Activated CD4-positive, alpha-beta T cell treated with anti-CD3 and anti-CD28 coated beads for 36 hours (primary cell): ENCODE measurements at regions of chr7 and their contacts with region 1.

Region 1: GRCh38 chr7:44797329-44798251 is 1.1 kb downstream of the PPIA start:
- DNase-seq: peak; percentile 91
- ATAC-seq: peak; percentile 58
- H3K4me3 Mint-ChIP-seq: peak overlapping the region; percentile 100
- H3K27ac Mint-ChIP-seq: peak overlapping the region; percentile 99
- H3K4me1 Mint-ChIP-seq: peaks cover 41% of the 10 kb centered on the region
- H3K27me3 Mint-ChIP-seq: no peaks in the 10 kb centered on the region

Region 2: DNA sequence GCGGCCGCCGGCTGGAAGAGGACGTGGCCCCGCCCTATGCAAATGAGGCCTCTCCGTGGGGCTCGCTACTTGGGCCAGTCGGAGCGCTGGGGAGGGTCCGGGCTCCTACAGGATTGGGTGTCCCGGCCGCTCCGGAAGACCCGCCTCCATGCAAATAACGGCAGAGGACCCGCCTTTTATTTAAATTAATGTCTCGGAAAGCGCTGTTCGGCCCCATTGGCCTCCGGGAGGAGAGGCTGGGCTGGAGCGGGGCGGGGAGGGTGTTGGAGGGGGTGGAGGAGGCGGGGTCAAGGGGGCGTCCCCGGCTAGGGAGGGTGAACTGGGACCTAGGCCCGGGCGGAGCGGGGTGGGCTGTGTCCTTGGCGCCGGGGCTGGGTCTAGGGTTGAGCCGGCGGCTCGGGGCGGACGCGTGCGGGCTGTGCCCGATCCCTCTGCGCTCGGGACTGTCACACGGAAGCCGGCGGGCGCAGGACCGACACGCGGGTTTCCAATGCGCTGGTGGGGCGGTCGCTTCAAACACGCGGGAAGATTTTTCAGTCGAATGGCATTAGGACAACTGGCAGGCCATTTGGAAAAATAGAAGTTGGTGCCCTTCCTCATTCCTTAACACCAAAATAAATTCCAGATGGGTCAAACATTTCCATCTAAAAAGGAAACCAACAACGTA is 714.9 kb before region 1 on chr7:
- CTCF ChIA-PET with region 1: interaction called, 4 read pairs
- POLR2A ChIA-PET with region 1: no interaction called
- intact Hi-C with region 1: loop called (anchors 1 to 2 kb)
- DNase-seq: peak; percentile 99
- ATAC-seq: peak; percentile 95
- H3K4me3 Mint-ChIP-seq: peak overlapping the region; percentile 70
- H3K27ac Mint-ChIP-seq: peak overlapping the region; percentile 79
- H3K4me1 Mint-ChIP-seq: peaks cover 36% of the 10 kb centered on the region
- H3K27me3 Mint-ChIP-seq: no peaks in the 10 kb centered on the region

Region 3: DNA sequence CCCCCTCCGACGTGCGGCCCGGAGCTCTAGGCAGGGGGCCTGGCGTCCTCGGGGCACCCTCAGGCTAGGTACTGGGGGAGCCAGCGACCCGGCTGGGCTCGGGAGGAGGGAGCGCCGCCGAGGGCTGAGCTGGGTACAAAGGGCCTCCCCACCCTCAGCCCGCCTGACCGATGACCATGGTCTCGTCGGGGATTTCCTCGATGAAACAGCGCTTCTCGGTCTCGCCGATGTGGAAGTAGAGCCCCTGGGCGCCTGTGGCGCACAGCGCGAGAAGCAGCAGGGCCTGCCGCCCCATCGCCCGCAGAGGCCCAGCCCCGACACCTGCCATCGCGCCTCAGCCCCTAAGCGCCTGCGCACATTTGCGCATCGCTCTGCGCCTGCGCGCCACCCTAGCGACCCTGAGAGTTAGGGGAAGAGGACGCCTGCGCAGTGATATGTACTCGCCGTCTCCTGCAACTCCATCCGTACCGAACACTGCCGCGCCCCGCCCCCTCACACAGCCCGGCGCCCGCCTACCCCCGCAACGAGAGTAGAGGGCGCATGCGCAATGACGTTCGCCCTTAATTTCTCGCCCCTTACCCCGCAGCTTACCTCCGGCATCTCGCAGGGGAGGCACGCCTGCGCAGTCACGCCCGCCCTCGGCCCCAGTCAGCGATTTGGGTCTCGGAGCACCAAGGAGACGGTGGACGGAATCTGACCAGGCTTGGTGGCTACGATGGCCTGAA is 215.5 kb before region 1 on chr7 and contains the start of gene TMED4:
- CTCF ChIA-PET with region 1: no interaction called
- POLR2A ChIA-PET with region 1: interaction called, 7 read pairs
- intact Hi-C with region 1: loop called (anchors 1 to 2 kb)
- DNase-seq: peak; percentile 100
- ATAC-seq: peak; percentile 95
- H3K4me3 Mint-ChIP-seq: peak within 1 kb of the TSS; percentile 85
- H3K27ac Mint-ChIP-seq: peak within 1 kb of the TSS; percentile 92
- H3K4me1 Mint-ChIP-seq: peaks cover 33% of the 10 kb centered on the region
- H3K27me3 Mint-ChIP-seq: no peaks in the 10 kb centered on the region
- total RNA-seq, gene TMED4: 71.6 to 73.0 TPM

Region 4: GRCh38 chr7:44638611-44639557 is 158.7 kb before region 1 on chr7:
- CTCF ChIA-PET with region 1: interaction called, 5 read pairs
- POLR2A ChIA-PET with region 1: interaction called, 4 read pairs
- intact Hi-C with region 1: loop called in 1 of 2 experiments (anchors 1 kb)
- DNase-seq: peak; percentile 90
- ATAC-seq: peak; percentile 71
- H3K4me3 Mint-ChIP-seq: peak overlapping the region; percentile 73
- H3K27ac Mint-ChIP-seq: peak overlapping the region; percentile 100
- H3K4me1 Mint-ChIP-seq: peaks cover 75% of the 10 kb centered on the region
- H3K27me3 Mint-ChIP-seq: no peaks in the 10 kb centered on the region

Region 5: GRCh38 chr7:44885394-44886317 is 88.1 kb after region 1 on chr7 and contains the start of gene PURB:
- CTCF ChIA-PET with region 1: no interaction called
- POLR2A ChIA-PET with region 1: interaction called, 18 read pairs
- intact Hi-C with region 1: loop called in 1 of 2 experiments (anchors 1 kb)
- DNase-seq: peak; percentile 98
- ATAC-seq: peak; percentile 97
- H3K4me3 Mint-ChIP-seq: peak within 1 kb of the TSS; percentile 86
- H3K27ac Mint-ChIP-seq: peak within 1 kb of the TSS; percentile 98
- H3K4me1 Mint-ChIP-seq: peaks cover 51% of the 10 kb centered on the region
- H3K27me3 Mint-ChIP-seq: no peaks in the 10 kb centered on the region
- total RNA-seq, gene PURB: 18.8 to 20.8 TPM

Region 6: DNA sequence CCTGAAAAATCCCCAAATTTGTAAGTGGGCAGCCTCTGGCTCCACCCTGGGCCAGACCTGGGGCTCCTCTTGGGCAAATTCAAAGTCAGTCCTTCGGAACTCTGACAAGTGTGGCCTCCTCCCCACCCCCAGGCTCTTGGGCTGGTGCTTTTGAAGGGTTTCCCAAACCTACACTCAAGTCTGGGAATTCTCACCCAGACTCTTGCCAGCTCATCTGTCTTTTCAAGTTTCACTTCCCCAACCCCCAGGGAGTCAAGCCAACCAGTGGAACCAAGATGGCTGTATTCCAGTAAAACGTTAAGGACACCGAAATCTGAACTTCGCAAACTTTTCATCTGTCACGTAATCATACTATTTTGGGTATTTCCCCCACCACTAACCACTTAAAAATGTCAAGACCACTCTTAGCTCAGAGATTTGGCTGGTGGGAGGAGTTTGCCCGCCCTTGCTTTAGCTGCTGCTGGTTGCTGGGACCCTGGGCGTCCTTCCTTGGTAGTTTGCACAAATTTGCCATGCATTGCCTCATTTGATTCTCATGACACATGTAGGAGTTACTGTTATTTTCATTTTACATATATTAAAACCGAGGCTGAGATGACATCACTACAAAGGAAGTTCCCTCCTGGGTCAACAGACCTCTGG is 182.9 kb after region 1 on chr7:
- CTCF ChIA-PET with region 1: no interaction called
- POLR2A ChIA-PET with region 1: interaction called, 3 read pairs
- intact Hi-C with region 1: loop called (anchors 1 to 5 kb)
- DNase-seq: peak; percentile 94
- ATAC-seq: peak; percentile 48
- H3K4me3 Mint-ChIP-seq: peak overlapping the region; percentile 99
- H3K27ac Mint-ChIP-seq: peak overlapping the region; percentile 99
- H3K4me1 Mint-ChIP-seq: peaks cover 68% of the 10 kb centered on the region
- H3K27me3 Mint-ChIP-seq: no peaks in the 10 kb centered on the region

Region 7: DNA sequence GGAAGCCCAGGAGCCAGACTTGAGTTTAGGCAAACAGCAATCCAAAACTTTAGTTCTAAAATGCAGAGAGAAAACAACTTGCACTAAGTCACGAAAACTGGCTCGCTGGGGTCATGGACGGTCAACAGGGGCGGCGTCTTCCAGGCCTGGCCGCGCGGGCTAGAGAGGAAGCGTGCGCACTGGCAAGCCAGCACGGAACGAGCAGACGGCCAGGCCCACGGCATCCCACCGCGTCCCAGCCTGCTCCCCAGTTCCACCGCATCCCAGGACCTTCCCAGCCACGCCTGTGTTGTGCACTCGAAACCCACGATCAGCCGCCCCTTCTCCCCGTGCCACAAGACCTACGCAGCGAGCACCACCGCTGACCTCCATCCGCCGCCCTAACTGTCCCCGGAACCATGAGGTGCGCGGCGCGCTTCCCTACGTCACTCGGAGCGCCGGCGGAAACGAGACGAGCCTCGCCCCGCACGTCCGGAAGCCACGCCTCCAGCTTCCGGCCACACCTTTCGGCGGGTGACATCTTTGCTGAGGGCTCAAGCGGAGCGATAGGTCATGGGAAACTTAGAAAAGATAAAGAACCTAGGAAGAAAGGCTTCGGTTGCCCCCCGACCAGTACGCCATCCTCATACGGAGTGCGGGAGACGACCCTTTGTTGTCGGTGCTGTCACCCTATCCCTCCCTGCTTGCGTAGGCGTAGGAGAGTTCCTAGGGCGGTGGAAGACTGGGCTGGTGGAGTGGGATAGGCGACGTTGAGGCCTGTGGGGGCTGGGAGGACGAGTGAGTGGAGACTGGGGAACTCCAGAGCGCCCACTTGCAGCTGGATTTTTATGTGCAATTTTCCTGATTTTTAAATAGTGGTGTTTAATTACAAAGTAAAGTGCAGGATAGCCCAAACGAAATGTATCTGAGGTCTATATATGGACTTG is 314.0 kb after region 1 on chr7 and contains the start of gene TBRG4:
- CTCF ChIA-PET with region 1: no interaction called
- POLR2A ChIA-PET with region 1: no interaction called
- intact Hi-C with region 1: loop called in 1 of 2 experiments (anchors 1 kb)
- DNase-seq: peak; percentile 97
- ATAC-seq: peak; percentile 95
- H3K4me3 Mint-ChIP-seq: peak within 1 kb of the TSS; percentile 94
- H3K27ac Mint-ChIP-seq: peak within 1 kb of the TSS; percentile 96
- H3K4me1 Mint-ChIP-seq: peaks cover 35% of the 10 kb centered on the region
- H3K27me3 Mint-ChIP-seq: peaks cover 2% of the 10 kb centered on the region
- total RNA-seq, gene TBRG4: 158 to 163 TPM

Region 8: GRCh38 chr7:45420843-45421495 is 623.4 kb after region 1 on chr7:
- CTCF ChIA-PET with region 1: no interaction called
- POLR2A ChIA-PET with region 1: no interaction called
- intact Hi-C with region 1: no loop called
- DNase-seq: no peak
- ATAC-seq: no peak
- H3K4me3 Mint-ChIP-seq: no peak overlapping the region
- H3K27ac Mint-ChIP-seq: no peak overlapping the region
- H3K4me1 Mint-ChIP-seq: peaks cover 3% of the 10 kb centered on the region
- H3K27me3 Mint-ChIP-seq: peaks cover 20% of the 10 kb centered on the region